Activated naive CD4-positive, alpha-beta T cell treated with anti-CD3 and anti-CD28 coated beads for 36 hours (primary cell): ENCODE measurements at regions of chrX and their contacts with region 1.

Region 1: GRCh38 chrX:115147220-115147619 is 42.0 kb upstream of the RBMXL3 start:
- DNase-seq: no peak
- H3K4me3 Mint-ChIP-seq: no peak overlapping the region
- H3K27ac Mint-ChIP-seq: no peak overlapping the region
- H3K4me1 Mint-ChIP-seq: no peaks in the 10 kb centered on the region
- H3K27me3 Mint-ChIP-seq: no peaks in the 10 kb centered on the region

Region 2: GRCh38 chrX:114611018-114611619 is 536.1 kb before region 1 on chrX:
- CTCF ChIA-PET with region 1: no interaction called
- intact Hi-C with region 1: loop called (anchors 2 kb)
- DNase-seq: peak; percentile 16
- H3K4me3 Mint-ChIP-seq: no peak overlapping the region
- H3K27ac Mint-ChIP-seq: no peak overlapping the region
- H3K4me1 Mint-ChIP-seq: no peaks in the 10 kb centered on the region
- H3K27me3 Mint-ChIP-seq: no peaks in the 10 kb centered on the region

Region 3: GRCh38 chrX:115058276-115058675 is 88.9 kb before region 1 on chrX:
- CTCF ChIA-PET with region 1: no interaction called
- intact Hi-C with region 1: no loop called
- DNase-seq: no peak
- H3K4me3 Mint-ChIP-seq: no peak overlapping the region
- H3K27ac Mint-ChIP-seq: no peak overlapping the region
- H3K4me1 Mint-ChIP-seq: no peaks in the 10 kb centered on the region
- H3K27me3 Mint-ChIP-seq: no peaks in the 10 kb centered on the region

Region 4: GRCh38 chrX:115134382-115134781 is 12.8 kb before region 1 on chrX:
- CTCF ChIA-PET with region 1: no interaction called
- intact Hi-C with region 1: no loop called
- DNase-seq: no peak
- H3K4me3 Mint-ChIP-seq: no peak overlapping the region
- H3K27ac Mint-ChIP-seq: no peak overlapping the region
- H3K4me1 Mint-ChIP-seq: no peaks in the 10 kb centered on the region
- H3K27me3 Mint-ChIP-seq: no peaks in the 10 kb centered on the region

Region 5: GRCh38 chrX:115494161-115494560 is 346.9 kb after region 1 on chrX:
- CTCF ChIA-PET with region 1: no interaction called
- intact Hi-C with region 1: no loop called
- DNase-seq: no peak
- H3K4me3 Mint-ChIP-seq: no peak overlapping the region
- H3K27ac Mint-ChIP-seq: no peak overlapping the region
- H3K4me1 Mint-ChIP-seq: no peaks in the 10 kb centered on the region
- H3K27me3 Mint-ChIP-seq: no peaks in the 10 kb centered on the region